GM10248 (cell line): ENCODE measurements at regions of chr6 and their contacts with region 1.

Region 1: GRCh38 chr6:52664186-52664990 is 6.5 kb upstream of the TMEM14A start:
- DNase-seq: peak; percentile 95
- CTCF ChIP-seq: no peak

Region 2: GRCh38 chr6:50936277-50936681 is 1728.1 kb before region 1 on chr6:
- CTCF ChIA-PET with region 1: no interaction called
- POLR2A ChIA-PET with region 1: no interaction called
- DNase-seq: no peak
- CTCF ChIP-seq: no peak

Region 3: GRCh38 chr6:52647199-52647598 is 17.2 kb before region 1 on chr6:
- CTCF ChIA-PET with region 1: interaction called, 111 read pairs
- POLR2A ChIA-PET with region 1: no interaction called
- DNase-seq: no peak
- CTCF ChIP-seq: no peak

Region 4: DNA sequence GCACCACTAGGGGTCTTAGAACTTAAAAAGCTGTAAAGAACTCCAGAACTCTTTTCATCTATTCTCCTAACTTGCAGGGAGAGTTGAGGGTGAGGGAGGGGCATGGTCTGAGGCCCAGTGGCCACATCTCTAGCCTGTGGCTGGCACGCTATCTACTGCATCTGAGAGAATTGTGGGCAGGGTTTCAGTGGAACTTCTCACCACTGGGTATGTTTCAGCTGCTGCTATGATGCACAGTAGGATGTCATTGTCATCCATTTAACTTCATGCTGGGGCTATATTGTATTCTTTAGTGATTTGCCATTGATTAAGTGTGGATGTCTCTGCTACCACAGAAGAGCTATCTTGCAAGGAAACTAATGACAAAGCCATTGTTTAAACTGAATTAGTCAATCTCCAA is 11.0 kb after region 1 on chr6:
- CTCF ChIA-PET with region 1: interaction called, 22 read pairs
- POLR2A ChIA-PET with region 1: no interaction called
- DNase-seq: no peak
- CTCF ChIP-seq: no peak